Transverse colon (tissue), 4 donors: ENCODE measurements at regions of chr1 and their contacts with region 1.

Region 1: DNA sequence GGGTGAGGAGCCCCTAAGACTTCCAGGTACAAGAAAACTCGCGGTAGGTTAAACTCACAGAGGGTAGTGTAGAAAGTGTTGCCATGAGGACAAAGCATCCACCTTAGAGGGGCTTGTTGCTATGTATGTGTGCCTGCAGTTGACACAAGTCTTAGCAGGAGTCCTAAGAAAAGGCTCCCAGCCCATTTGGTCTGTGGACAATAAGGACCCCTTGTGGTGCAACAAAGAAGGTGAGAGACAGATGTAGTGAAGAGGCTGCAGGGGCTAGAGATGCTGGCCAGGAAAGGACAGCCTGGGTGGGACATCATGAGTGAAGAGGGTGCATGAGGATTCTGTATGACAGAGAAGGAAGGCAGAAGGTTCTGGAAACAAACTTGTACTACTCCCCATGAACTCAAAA is 36.3 kb upstream of the IL10 start:
- DNase-seq: peak; percentile 15
- H3K4me3 ChIP-seq: no peak overlapping the region
- H3K27ac ChIP-seq: no peak overlapping the region
- H3K4me1 ChIP-seq: peaks cover 0 to 2% (median 0%) of the 10 kb centered on the region in 4 donors
- H3K27me3 ChIP-seq: peaks cover 5% of the 10 kb centered on the region
- CTCF ChIP-seq: peak in 3 of 5 experiments; percentile 8 to 25 (median 14)
- EP300 ChIP-seq: no peak
- POLR2A ChIP-seq: no peak

Region 2: DNA sequence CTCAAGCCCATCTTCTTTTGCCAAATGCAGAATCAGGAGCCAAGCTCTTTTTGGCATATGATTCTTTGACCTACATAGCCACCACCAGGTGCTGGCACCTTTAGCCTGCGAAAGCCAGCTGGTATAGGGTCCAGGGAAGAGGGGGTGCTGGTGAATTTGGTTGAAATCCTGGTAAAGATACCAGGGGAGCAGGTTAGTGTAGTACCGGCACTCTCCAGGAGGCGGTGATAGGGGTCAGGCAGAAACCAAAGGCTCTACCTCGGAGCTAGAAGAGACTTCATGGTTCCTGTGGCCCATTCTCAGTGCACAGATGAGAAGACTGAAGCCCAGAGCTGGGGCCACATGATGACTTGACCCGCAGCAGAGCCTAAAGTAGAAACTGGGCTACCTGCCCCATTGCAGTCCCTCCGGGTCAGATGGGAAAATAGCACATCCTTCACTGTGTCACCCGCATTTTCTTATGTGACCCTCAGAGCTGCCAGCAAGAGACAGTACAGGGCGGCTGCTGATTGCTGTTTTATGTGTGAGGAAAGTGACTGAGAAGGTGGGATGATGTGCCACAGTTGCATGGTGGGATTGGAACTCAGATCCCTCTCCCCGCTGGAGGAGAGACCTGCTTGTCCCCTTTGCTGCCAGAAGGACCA is 74.0 kb before region 1 on chr1:
- in situ Hi-C with region 1: loop called in 1 of 4 experiments (anchors 10 kb)
- intact Hi-C with region 1: no loop called
- DNase-seq: peak; percentile 62
- H3K4me3 ChIP-seq: no peak overlapping the region
- H3K27ac ChIP-seq: no peak overlapping the region
- H3K4me1 ChIP-seq: peaks cover 0 to 23% (median 5%) of the 10 kb centered on the region in 4 donors
- H3K27me3 ChIP-seq: no peaks in the 10 kb centered on the region
- CTCF ChIP-seq: peak; percentile 66 to 80 (median 74)
- EP300 ChIP-seq: no peak
- POLR2A ChIP-seq: no peak